ENCODE measurements at regions of chr9 and their contacts with region 1.

Region 1: DNA sequence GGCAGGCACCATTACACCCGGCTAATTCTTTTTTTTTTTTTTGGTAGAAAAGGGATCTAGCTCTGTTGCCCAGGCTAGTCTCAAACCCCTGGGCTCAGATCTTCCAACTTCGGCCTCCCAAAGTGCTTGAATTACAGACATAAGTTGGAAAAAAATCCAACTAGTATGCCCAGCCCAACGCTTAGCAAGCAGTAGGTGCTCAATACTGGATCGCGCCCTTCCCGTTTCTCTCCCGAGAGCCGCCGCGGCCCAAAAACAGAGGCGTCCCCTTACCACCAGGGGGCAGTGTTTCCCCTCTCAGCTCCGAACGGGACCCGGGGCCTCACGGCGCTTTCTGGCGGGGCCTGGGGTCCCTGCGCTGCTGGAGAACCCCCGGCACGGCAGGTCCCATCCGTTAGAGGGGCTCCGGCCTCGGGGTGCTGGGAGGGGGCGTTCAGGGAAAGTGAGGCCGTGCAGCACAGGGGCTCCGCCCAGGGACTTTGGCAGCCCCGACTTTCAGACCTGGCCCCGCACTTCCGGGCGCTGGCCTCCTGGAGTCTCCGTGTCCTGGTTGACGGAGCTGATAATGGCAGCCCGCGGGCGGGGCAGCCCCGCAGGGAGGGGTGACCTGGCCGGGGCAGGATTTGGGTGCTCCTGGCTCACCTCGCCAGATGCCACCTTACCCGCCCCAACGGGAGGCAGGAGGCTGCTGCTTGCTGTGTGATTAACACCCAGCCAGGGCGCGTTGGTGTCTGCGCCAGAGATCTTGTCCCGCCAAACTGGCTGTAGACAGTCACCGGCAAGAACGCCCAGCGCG is 15.2 kb downstream of the PTGES start:
- DNase-seq: peak; percentile 90
- ATAC-seq: peak; percentile 85
- H3K4me3 Mint-ChIP-seq: peak overlapping the region; percentile 61
- H3K27ac Mint-ChIP-seq: no peak overlapping the region
- H3K4me1 Mint-ChIP-seq: peaks cover 5% of the 10 kb centered on the region; the same call in 1 of the 2 replicates
- H3K27me3 Mint-ChIP-seq: no peaks in the 10 kb centered on the region; the same call in 1 of the 2 replicates
- CTCF ChIP-seq: peak; percentile 98

Region 2: DNA sequence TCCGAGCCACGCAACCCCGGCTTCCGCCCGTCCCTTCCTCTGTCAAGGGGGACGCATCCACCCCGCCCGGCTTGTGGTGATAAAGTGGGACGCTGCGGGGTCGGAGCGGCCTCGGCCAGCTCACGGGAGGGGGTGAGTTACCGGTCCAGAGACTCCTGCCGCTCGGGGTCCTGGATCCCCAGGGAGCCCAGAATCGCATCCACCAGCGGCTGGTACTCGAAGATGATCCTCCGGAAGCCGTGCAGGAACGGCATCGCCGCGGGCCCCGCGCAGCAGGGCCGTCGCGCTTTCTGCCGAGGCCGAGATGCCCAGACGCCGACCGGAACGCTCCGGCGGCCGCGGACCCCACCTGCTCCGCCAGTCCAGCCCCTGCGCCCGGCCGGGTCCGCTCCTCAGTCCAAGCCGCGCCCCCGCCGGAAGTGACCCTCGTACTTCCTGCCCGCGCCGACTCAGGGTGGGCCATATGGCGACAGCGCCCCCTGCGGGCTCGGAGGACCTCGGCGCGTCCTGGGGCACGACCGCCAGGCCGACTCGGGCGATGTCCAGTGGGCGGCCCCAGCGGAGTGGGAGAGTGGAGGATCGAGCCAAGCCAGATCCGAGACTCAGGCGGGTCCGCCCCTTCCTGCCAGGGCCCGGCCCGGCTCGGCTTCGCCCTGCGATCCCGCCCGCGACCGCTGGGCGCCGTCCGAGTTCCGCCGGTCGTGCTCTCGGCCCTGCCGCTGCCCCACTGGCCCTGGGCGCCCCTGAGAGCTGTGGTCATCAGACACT is 95.7 kb before region 1 on chr9 and contains the start of gene ASB6:
- CTCF ChIA-PET with region 1: interaction called, 22 read pairs
- POLR2A ChIA-PET with region 1: no interaction called
- DNase-seq: peak; percentile 99
- ATAC-seq: peak; percentile 98
- H3K4me3 Mint-ChIP-seq: peak within 1 kb of the TSS; percentile 79
- H3K27ac Mint-ChIP-seq: peak within 1 kb of the TSS; percentile 92
- H3K4me1 Mint-ChIP-seq: peaks cover 14% of the 10 kb centered on the region
- H3K27me3 Mint-ChIP-seq: no peaks in the 10 kb centered on the region; the same call in 1 of the 2 replicates
- CTCF ChIP-seq: peak; percentile 97
- total RNA-seq, gene ASB6: 19.3 to 20.0 TPM (median 19.7 TPM) in 3 replicates

Region 3: GRCh38 chr9:129676975-129677841 is 60.5 kb before region 1 on chr9:
- CTCF ChIA-PET with region 1: interaction called, 10 read pairs
- POLR2A ChIA-PET with region 1: interaction called, 3 read pairs
- DNase-seq: no peak
- ATAC-seq: peak; percentile 55
- H3K4me3 Mint-ChIP-seq: no peak overlapping the region
- H3K27ac Mint-ChIP-seq: no peak overlapping the region
- H3K4me1 Mint-ChIP-seq: peaks cover 9% of the 10 kb centered on the region; the same call in 1 of the 2 replicates
- H3K27me3 Mint-ChIP-seq: no peaks in the 10 kb centered on the region; the same call in 1 of the 2 replicates
- CTCF ChIP-seq: no peak

Region 4: DNA sequence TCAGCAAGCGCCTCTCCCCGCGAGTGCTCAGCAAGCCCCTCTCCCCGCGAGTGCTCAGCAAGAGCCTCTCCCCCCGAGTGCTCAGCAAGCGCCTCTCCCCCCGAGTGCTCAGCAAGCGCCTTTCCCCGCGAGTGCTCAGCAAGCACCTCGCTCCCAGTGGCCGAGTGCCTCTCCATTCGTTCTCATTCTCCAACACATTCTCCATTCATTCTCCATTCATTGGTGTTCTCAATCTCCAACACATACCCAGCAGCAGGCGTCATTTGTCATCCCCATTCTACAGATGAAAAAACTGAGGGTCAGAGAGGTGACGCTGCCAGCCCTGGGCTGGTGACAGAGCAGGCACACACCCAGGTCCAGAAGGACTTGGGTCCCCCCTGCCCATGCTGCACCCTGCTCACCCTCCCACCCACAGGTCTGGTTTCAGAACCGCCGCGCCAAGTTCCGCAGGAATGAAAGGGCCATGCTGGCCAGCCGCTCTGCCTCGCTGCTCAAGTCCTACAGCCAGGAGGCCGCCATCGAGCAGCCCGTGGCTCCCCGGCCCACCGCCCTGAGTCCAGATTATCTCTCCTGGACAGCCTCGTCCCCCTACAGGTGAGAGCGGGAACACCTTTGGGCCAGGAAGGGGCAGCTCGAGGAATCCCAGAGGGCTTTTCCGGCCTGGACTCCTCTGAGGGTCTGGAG is 17.4 kb before region 1 on chr9:
- CTCF ChIA-PET with region 1: interaction called, 99 read pairs
- POLR2A ChIA-PET with region 1: no interaction called
- DNase-seq: peak; percentile 85
- ATAC-seq: peak; percentile 91
- H3K4me3 Mint-ChIP-seq: no peak overlapping the region
- H3K27ac Mint-ChIP-seq: no peak overlapping the region
- H3K4me1 Mint-ChIP-seq: no peaks in the 10 kb centered on the region
- H3K27me3 Mint-ChIP-seq: peaks cover 3% of the 10 kb centered on the region; the same call in 1 of the 2 replicates
- CTCF ChIP-seq: peak; percentile 68

Region 5: GRCh38 chr9:129752915-129753729 is 15.4 kb after region 1 on chr9 and contains the start of gene PTGES:
- CTCF ChIA-PET with region 1: interaction called, 55 read pairs
- POLR2A ChIA-PET with region 1: interaction called, 6 read pairs
- DNase-seq: peak; percentile 65
- ATAC-seq: peak; percentile 92
- H3K4me3 Mint-ChIP-seq: peak within 1 kb of the TSS; percentile 45
- H3K27ac Mint-ChIP-seq: no peak within 1 kb of the TSS
- H3K4me1 Mint-ChIP-seq: peaks cover 15% of the 10 kb centered on the region
- H3K27me3 Mint-ChIP-seq: no peaks in the 10 kb centered on the region
- CTCF ChIP-seq: no peak
- total RNA-seq, gene PTGES: 2.5 to 4.4 TPM (median 3.2 TPM) in 3 replicates

Region 6: DNA sequence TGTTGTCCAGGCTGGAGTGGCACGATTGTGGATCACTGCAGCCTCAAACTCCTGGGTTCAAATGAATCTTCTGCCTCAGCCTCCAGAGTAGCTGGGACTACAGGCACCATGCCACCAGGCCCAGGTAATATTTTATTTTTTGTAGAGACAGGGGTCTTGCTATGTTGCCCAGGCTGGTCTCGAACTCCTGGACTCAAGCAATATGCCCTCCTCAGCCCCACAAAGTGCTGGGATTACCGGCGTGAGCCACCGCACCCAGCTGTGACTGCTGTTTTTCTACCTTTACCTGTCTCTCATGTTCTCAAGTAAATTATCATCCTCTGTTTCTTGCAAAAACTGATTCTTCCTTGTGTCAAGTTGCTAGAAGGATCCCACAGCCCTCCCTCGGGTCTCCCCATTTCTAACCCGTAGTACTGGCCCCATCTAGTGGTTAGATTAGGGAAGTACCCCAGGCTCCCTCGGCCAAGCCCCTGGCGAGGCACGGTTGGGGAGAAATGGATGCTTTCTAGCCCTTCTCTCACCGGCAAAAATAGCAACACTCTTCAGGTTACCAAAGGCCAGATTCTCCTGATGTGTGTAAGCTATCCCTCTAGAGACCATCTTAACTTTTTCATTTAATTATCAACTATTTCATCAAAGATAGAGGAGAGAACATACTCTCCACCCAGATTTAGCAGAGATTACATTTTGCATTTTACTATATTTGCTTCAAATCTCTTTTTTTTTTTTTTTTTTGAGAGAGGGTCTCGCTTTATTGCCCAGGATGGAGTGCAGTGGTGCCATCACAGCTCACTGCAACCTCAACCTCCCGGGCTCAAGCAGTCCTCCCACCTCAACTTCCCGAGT is 46.1 kb after region 1 on chr9:
- CTCF ChIA-PET with region 1: interaction called, 101 read pairs
- POLR2A ChIA-PET with region 1: no interaction called
- DNase-seq: peak; percentile 84
- ATAC-seq: peak; percentile 97
- H3K4me3 Mint-ChIP-seq: no peak overlapping the region
- H3K27ac Mint-ChIP-seq: no peak overlapping the region
- H3K4me1 Mint-ChIP-seq: no peaks in the 10 kb centered on the region
- H3K27me3 Mint-ChIP-seq: no peaks in the 10 kb centered on the region; the same call in 1 of the 2 replicates
- CTCF ChIP-seq: peak; percentile 90

Region 7: DNA sequence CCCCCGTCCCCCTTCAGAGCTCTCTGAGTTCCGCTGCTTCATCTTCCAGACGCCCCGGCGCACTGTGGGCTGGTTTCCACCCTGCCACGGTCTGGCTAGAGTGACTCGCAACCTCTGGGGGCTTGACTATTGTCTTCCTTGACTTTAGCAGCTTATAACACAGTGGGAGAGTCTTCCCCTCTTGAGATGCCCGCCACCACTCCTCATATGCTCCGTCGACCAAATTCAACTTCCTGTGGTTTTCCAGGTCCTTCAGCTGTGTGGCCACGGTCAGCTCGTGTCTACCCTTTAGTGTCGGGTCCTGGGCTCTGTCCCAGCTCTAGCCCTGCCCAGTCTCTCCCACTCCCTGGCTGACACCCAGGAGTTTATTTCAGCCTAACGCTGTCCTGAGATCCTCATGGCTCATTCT is 406.3 kb after region 1 on chr9:
- CTCF ChIA-PET with region 1: no interaction called
- POLR2A ChIA-PET with region 1: no interaction called
- DNase-seq: no peak
- ATAC-seq: peak; percentile 12; the same call in 1 of the 2 replicates
- H3K4me3 Mint-ChIP-seq: no peak overlapping the region
- H3K27ac Mint-ChIP-seq: no peak overlapping the region
- H3K4me1 Mint-ChIP-seq: peaks cover 24% of the 10 kb centered on the region
- H3K27me3 Mint-ChIP-seq: no peaks in the 10 kb centered on the region
- CTCF ChIP-seq: no peak

Region 8: GRCh38 chr9:130186839-130187522 is 449.3 kb after region 1 on chr9:
- CTCF ChIA-PET with region 1: no interaction called
- POLR2A ChIA-PET with region 1: no interaction called
- DNase-seq: peak; percentile 65
- ATAC-seq: peak; percentile 85
- H3K4me3 Mint-ChIP-seq: 0 out of 2 replicates have a peak overlapping the region, but pooled peaks have one; percentile 8
- H3K27ac Mint-ChIP-seq: peak overlapping the region; percentile 52
- H3K4me1 Mint-ChIP-seq: peaks cover 31% of the 10 kb centered on the region
- H3K27me3 Mint-ChIP-seq: no peaks in the 10 kb centered on the region
- CTCF ChIP-seq: no peak